CD4-positive, alpha-beta T cell (primary cell): ENCODE measurements at regions of chr19 and their contacts with region 1.

Region 1: DNA sequence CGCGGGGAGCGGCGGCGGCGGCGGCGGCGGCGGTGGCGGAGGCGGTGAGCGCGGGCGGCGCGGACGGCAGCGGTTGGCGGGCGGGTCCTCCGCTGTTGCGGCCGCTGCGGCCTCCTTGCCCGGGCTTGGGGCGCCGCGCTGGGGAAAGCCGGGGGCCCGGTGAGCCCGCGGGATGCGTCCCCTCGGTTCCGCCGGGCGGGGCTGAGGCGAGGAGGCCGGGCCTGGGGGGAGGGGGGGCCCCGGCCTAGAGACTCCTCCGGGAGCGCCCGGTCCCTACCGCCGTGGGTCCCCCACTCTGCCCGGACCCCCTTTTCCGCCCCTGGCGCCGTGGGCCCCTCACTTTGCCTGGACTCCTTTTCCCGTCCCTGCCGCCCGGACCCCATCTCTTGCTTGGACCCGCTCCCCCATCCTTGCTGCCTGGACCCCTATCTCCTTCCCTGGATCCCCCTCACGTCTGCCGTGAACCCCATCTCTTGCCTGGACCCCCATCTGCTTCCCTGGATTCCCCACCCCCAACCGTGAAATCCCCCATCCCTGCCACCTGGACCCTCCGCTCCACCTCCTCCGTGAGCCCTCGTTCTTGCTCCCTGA is 28.6 kb upstream of the NDUFS7 start:
- DNase-seq: peak in 1 of 14 experiments; percentile 13
- ATAC-seq: peak; percentile 57
- H3K4me3 ChIP-seq: peak overlapping the region; percentile 75
- H3K4me3 Mint-ChIP-seq: peak overlapping the region; percentile 83
- H3K27ac ChIP-seq: no peak overlapping the region
- H3K27ac Mint-ChIP-seq: peak overlapping the region; percentile 29
- H3K4me1 ChIP-seq: peaks cover 20% of the 10 kb centered on the region
- H3K4me1 Mint-ChIP-seq: peaks cover 17% of the 10 kb centered on the region
- H3K27me3 ChIP-seq: no peaks in the 10 kb centered on the region
- H3K27me3 Mint-ChIP-seq: no peaks in the 10 kb centered on the region
- CTCF ChIP-seq: no peak

Region 2: DNA sequence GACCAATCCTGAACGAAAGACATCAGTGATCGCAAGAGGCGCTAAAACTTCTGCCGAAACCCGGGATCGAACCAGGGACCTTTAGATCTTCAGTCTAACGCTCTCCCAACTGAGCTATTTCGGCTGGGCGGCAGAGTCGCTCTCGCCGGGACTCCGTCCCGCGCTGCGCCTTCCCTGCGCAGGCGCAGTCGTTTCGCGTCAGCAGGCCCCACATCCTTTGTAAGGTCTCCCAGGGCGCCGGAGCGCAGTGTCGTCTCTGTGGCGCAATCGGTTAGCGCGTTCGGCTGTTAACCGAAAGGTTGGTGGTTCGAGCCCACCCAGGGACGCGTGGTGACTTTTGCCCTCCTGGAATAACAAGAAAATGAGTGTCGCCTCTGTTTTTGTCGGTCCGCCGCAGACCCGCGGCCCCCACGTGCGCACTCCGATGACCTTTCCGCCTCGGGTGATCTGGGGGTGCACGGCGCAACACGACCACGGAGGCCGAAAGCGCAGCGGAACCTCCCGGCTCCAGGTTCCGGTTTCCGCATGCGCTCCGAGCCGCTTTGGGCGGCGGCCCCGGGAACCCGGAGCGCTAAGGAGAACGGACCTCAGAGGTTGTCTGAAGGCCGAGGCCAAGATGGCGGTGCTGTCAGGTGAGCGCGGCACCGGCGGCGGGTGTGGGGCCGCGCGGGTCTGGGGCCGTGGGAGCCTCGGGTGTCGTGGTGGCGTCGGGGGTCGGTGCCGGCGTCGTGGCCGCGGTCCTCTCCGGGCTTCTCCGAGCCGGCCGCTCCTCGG is 28.4 kb after region 1 on chr19 and contains the start of gene NDUFS7:
- CTCF ChIA-PET with region 1: no interaction called
- POLR2A ChIA-PET with region 1: interaction called, 8 read pairs
- intact Hi-C with region 1: loop called in 1 of 2 experiments (anchors 1 kb)
- DNase-seq: peak; percentile 85 to 100 (median 94)
- ATAC-seq: peak; percentile 90
- H3K4me3 ChIP-seq: peak within 1 kb of the TSS; percentile 92
- H3K4me3 Mint-ChIP-seq: peak within 1 kb of the TSS; percentile 97
- H3K27ac ChIP-seq: peak within 1 kb of the TSS; percentile 70 to 87
- H3K27ac Mint-ChIP-seq: peak within 1 kb of the TSS; percentile 98
- H3K4me1 ChIP-seq: peaks cover 34% of the 10 kb centered on the region
- H3K4me1 Mint-ChIP-seq: peaks cover 19% of the 10 kb centered on the region
- H3K27me3 ChIP-seq: no peaks in the 10 kb centered on the region
- H3K27me3 Mint-ChIP-seq: peaks cover 11% of the 10 kb centered on the region
- CTCF ChIP-seq: no peak
- total RNA-seq, gene NDUFS7: 40.0 to 42.6 TPM

Region 3: GRCh38 chr19:1401138-1401888 is 46.2 kb after region 1 on chr19 and contains the start of gene GAMT:
- CTCF ChIA-PET with region 1: no interaction called
- POLR2A ChIA-PET with region 1: no interaction called
- intact Hi-C with region 1: loop called in 1 of 2 experiments (anchors 1 kb)
- DNase-seq: peak in 13 of 14 experiments; percentile 20 to 82 (median 60)
- ATAC-seq: peak; percentile 86
- H3K4me3 ChIP-seq: peak within 1 kb of the TSS; percentile 52
- H3K4me3 Mint-ChIP-seq: peak within 1 kb of the TSS; percentile 87
- H3K27ac ChIP-seq: no peak within 1 kb of the TSS
- H3K27ac Mint-ChIP-seq: no peak within 1 kb of the TSS
- H3K4me1 ChIP-seq: peaks cover 39% of the 10 kb centered on the region
- H3K4me1 Mint-ChIP-seq: peaks cover 7% of the 10 kb centered on the region
- H3K27me3 ChIP-seq: peaks cover 0 to 11% of the 10 kb centered on the region in 2 experiments
- H3K27me3 Mint-ChIP-seq: no peaks in the 10 kb centered on the region
- CTCF ChIP-seq: peak; percentile 63
- total RNA-seq, gene GAMT: 11.0 to 13.0 TPM

Region 4: DNA sequence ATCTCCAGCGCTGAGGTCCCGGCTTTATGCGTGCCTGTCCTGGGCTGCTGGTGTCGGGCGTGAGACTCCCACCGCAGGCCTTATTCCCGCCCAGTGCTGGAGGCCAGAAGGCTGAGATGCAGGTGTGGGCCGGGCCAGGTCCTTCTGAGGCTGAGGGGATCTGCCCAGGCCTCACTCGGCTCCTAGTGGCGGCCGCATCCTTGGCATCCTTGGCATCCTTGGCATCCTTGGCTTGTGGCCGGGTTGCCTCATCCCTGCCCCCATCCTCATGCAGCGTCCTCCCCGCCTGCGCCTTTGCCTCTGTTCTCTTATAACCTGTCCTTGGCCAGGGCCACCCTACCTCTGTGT is 1761.2 kb after region 1 on chr19:
- CTCF ChIA-PET with region 1: no interaction called
- POLR2A ChIA-PET with region 1: no interaction called
- intact Hi-C with region 1: no loop called
- DNase-seq: no peak
- ATAC-seq: no peak
- H3K4me3 ChIP-seq: no peak overlapping the region
- H3K4me3 Mint-ChIP-seq: no peak overlapping the region
- H3K27ac ChIP-seq: no peak overlapping the region
- H3K27ac Mint-ChIP-seq: no peak overlapping the region
- H3K4me1 ChIP-seq: no peaks in the 10 kb centered on the region
- H3K4me1 Mint-ChIP-seq: no peaks in the 10 kb centered on the region
- H3K27me3 ChIP-seq: no peaks in the 10 kb centered on the region
- H3K27me3 Mint-ChIP-seq: no peaks in the 10 kb centered on the region
- CTCF ChIP-seq: no peak